Activated T-helper 1 cell treated with anti-CD3 and anti-CD28 coated beads, Interleukin-12 subunit alpha, Interleukin-12 subunit beta, Interleukin-2, Interleukin-4 antibody, amounts not matched to agents 30 ng/mL and 10 ng/mL and 1 ng/mL, durations not matched to agents 14 hours and 24 hours and 36 hours (primary cell): ENCODE measurements at regions of chr1 and their contacts with region 1.

Region 1: GRCh38 chr1:22704440-22705067 is 6.1 kb upstream of the EPHB2 start:
- DNase-seq: peak; percentile 55
- H3K4me3 Mint-ChIP-seq: no peak overlapping the region
- H3K27ac Mint-ChIP-seq: no peak overlapping the region
- H3K4me1 Mint-ChIP-seq: no peaks in the 10 kb centered on the region
- H3K27me3 Mint-ChIP-seq: peaks cover 22% of the 10 kb centered on the region

Region 2: DNA sequence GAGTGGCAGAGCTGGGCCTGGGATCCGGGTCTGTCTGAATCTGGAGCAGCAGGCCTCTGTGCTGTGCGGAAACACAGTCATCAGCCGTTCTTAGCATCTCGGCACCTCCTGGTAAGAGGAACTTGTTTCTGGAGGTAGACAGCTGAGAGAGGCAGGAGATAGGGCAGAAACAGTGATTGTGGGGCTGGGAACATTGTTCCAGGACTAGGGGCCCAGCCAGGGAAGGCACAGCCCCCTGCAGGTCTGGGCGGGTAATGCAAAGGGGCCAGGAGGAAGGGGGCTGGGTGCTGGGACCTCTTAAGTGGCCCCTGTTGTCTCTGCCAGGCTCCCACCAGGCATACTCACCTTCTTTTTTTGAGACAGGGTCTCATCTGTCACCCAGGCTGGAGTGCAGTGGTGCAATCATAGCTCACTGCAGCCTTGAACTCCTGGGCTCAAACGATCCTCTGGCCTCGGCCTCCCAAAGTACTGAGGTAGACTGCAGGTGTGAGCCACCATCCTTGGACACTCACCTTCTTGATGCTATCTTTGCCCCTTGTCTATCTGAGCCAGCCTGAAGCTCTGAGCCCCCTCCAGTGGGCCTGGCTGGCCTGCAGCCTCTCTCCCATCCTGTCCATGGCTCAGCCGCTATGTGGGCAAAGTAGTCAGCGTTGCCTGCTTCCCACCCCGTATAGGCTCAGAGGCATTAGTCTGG is 387.2 kb before region 1 on chr1:
- intact Hi-C with region 1: no loop called
- DNase-seq: no peak
- H3K4me3 Mint-ChIP-seq: no peak overlapping the region
- H3K27ac Mint-ChIP-seq: no peak overlapping the region
- H3K4me1 Mint-ChIP-seq: no peaks in the 10 kb centered on the region
- H3K27me3 Mint-ChIP-seq: peaks cover 6% of the 10 kb centered on the region

Region 3: DNA sequence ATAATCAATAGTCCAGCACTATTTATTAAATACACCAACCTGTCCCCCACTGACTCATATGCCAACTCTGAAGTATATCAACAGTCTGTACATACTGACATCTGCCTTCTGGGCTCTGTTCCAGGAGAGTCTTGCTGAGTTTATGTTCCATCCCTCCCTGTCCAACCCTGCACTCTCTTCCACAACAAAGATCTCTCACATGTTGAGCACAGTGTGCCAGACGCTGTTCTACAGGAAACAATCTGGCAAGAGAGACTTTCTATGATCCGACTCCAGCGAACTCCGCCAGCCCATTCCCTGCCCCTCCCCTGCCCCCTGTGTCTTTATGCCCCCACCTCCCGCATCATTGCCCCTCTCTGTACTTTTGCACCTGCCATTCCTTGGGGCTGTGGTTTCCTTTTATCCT is 264.8 kb after region 1 on chr1:
- intact Hi-C with region 1: loop called (anchors 1 kb)
- DNase-seq: no peak
- H3K4me3 Mint-ChIP-seq: no peak overlapping the region
- H3K27ac Mint-ChIP-seq: no peak overlapping the region
- H3K4me1 Mint-ChIP-seq: no peaks in the 10 kb centered on the region
- H3K27me3 Mint-ChIP-seq: peaks cover 40% of the 10 kb centered on the region